ENCODE measurements at regions of chr11 and their contacts with region 1.

Region 1: GRCh38 chr11:86068951-86069407 is at the start of gene PICALM:
- DNase-seq: peak; percentile 99
- H3K4me3 Mint-ChIP-seq: peak within 1 kb of the TSS; percentile 100
- H3K27ac Mint-ChIP-seq: peak within 1 kb of the TSS; percentile 97
- H3K4me1 Mint-ChIP-seq: peaks cover 33% of the 10 kb centered on the region
- H3K27me3 Mint-ChIP-seq: no peaks in the 10 kb centered on the region
- total RNA-seq, gene PICALM: 141 and 156 TPM in 2 replicates

Region 2: DNA sequence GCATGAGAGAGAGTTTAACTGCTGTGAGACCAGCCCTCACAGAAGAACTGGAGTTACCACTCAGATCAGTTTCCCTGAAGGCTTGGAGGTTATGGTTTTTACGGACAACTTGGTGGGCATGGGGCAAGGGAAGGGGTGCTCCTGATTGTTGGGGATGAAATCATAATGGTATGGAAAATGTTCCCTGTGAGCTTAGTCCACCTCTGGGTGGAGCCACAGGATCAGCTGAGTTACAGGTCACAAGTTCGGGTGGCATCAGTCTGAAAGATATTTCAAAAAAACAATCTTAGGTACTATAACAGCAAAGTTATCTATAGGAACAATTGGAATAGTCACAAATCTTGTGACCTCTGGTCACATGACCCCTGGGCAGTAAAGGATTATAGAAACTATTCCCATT is 604.7 kb before region 1 on chr11:
- intact Hi-C with region 1: no loop called
- DNase-seq: no peak
- H3K4me3 Mint-ChIP-seq: no peak overlapping the region
- H3K27ac Mint-ChIP-seq: no peak overlapping the region
- H3K4me1 Mint-ChIP-seq: no peaks in the 10 kb centered on the region
- H3K27me3 Mint-ChIP-seq: no peaks in the 10 kb centered on the region

Region 3: GRCh38 chr11:85664615-85665481 is 404.1 kb before region 1 on chr11 and contains the start of gene CREBZF:
- intact Hi-C with region 1: loop called (anchors 10 kb)
- DNase-seq: peak; percentile 98
- H3K4me3 Mint-ChIP-seq: peak within 1 kb of the TSS; percentile 97
- H3K27ac Mint-ChIP-seq: peak within 1 kb of the TSS; percentile 99
- H3K4me1 Mint-ChIP-seq: peaks cover 29% of the 10 kb centered on the region
- H3K27me3 Mint-ChIP-seq: peaks cover 2% of the 10 kb centered on the region
- total RNA-seq, gene CREBZF: 50.9 and 54.5 TPM in 2 replicates

Region 4: GRCh38 chr11:86047275-86047991 is 21.5 kb before region 1 on chr11:
- intact Hi-C with region 1: loop called (anchors 1 kb)
- DNase-seq: peak; percentile 64
- H3K4me3 Mint-ChIP-seq: peak overlapping the region; percentile 57
- H3K27ac Mint-ChIP-seq: peak overlapping the region; percentile 96
- H3K4me1 Mint-ChIP-seq: peaks cover 72% of the 10 kb centered on the region
- H3K27me3 Mint-ChIP-seq: no peaks in the 10 kb centered on the region

Region 5: GRCh38 chr11:86138958-86139357 is 70.0 kb after region 1 on chr11:
- intact Hi-C with region 1: loop called (anchors 2 kb)
- DNase-seq: peak; percentile 79
- H3K4me3 Mint-ChIP-seq: peak overlapping the region; percentile 72
- H3K27ac Mint-ChIP-seq: peak overlapping the region; percentile 85
- H3K4me1 Mint-ChIP-seq: peaks cover 58% of the 10 kb centered on the region
- H3K27me3 Mint-ChIP-seq: no peaks in the 10 kb centered on the region

Region 6: DNA sequence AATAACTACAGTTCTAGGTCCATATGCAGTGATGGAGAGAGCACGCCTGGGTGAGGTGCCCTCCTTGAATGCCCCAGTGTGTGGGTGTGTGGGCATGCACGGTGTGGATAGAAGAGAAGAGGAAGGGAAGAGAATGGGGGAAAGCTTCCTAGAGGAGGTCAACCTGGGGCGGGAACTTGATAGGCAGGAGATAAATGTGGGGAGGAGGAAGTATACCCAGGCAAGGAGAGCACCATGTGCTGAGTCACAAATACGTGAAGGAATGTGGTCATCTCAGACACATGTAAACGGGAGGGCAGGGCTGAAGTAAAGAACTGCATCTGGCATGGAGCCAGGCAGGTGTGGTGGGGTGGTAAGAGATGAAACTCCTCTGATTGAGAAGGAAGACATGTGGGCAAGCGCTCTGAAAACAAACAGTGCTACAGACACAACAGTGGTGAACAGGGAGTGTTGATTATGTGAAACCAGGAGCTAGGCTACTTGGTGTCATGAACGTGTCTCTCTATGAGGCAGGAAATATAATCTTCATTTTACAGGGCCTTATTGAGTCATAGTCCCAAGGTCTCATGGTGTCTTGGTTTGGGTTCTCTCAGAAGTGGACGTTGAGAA is 114.1 kb after region 1 on chr11:
- intact Hi-C with region 1: loop called (anchors 2 kb)
- DNase-seq: peak; percentile 83
- H3K4me3 Mint-ChIP-seq: no peak overlapping the region
- H3K27ac Mint-ChIP-seq: no peak overlapping the region
- H3K4me1 Mint-ChIP-seq: peaks cover 17% of the 10 kb centered on the region
- H3K27me3 Mint-ChIP-seq: no peaks in the 10 kb centered on the region

Region 7: DNA sequence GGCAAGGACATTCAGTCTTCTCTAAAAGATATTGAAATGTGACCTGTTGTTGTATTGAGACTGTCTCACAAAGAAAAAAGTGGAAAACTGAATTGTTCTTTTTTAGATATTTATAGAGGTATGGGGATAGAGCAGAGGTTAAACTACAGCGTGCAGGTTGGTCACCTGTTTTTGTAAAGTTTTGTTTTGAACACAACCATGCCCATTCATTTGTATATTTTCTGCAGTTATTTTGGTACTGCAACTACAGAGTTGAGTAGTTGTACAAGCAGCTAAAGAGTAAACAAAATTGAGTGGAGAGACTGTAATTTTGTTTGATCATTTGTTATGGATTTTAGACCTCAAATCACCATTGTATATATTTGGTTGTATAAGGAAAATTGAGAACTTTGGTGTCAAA is 186.9 kb after region 1 on chr11:
- intact Hi-C with region 1: no loop called
- DNase-seq: no peak
- H3K4me3 Mint-ChIP-seq: peak overlapping the region; percentile 11
- H3K27ac Mint-ChIP-seq: peak overlapping the region; percentile 66
- H3K4me1 Mint-ChIP-seq: peaks cover 30% of the 10 kb centered on the region
- H3K27me3 Mint-ChIP-seq: no peaks in the 10 kb centered on the region